Transverse colon (tissue), 4 donors: ENCODE measurements at regions of chr4 and their contacts with region 1.

Region 1: DNA sequence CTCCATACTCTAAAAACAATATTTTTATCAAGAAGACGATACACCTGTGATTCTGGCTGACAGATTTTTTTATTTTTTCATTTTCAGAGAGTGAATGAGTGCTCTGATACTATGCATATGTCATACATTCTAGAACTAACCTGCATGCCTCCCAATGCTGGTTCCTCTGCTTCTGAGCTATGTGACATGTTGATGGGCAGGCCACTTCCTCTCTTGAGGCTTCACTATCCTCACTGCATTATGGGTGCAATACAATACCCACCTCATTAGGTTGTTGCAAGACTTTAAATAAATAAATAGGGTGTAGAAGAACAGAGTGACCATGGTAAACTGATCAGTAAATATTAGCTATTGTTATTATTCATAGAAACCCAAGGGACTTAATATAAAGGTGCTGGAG is 408.3 kb downstream of the HNRNPD start:
- DNase-seq: no peak
- H3K4me3 ChIP-seq: no peak overlapping the region
- H3K27ac ChIP-seq: no peak overlapping the region
- H3K4me1 ChIP-seq: no peaks in the 10 kb centered on the region
- H3K27me3 ChIP-seq: no peaks in the 10 kb centered on the region
- CTCF ChIP-seq: no peak
- EP300 ChIP-seq: no peak
- POLR2A ChIP-seq: no peak

Region 2: GRCh38 chr4:82192017-82192673 is 226.7 kb after region 1 on chr4:
- in situ Hi-C with region 1: no loop called
- intact Hi-C with region 1: loop called (anchors 5 kb)
- DNase-seq: no peak
- H3K4me3 ChIP-seq: no peak overlapping the region
- H3K27ac ChIP-seq: no peak overlapping the region
- H3K4me1 ChIP-seq: no peaks in the 10 kb centered on the region
- H3K27me3 ChIP-seq: no peaks in the 10 kb centered on the region
- CTCF ChIP-seq: no peak
- EP300 ChIP-seq: no peak
- POLR2A ChIP-seq: no peak